ENCODE measurements at regions of chr6 and their contacts with region 1.

Region 1: GRCh38 chr6:111605100-111605751 is 452 bp downstream of the TRAF3IP2 start:
- DNase-seq: peak; percentile 88 to 91
- ATAC-seq: peak; percentile 83
- H3K4me3 ChIP-seq: peak overlapping the region; percentile 43 to 66
- H3K27ac ChIP-seq: peak overlapping the region; percentile 98 to 99
- H3K4me1 ChIP-seq: peaks cover 2 to 6% of the 10 kb centered on the region in 2 donors
- H3K27me3 ChIP-seq: no peaks in the 10 kb centered on the region

Region 2: DNA sequence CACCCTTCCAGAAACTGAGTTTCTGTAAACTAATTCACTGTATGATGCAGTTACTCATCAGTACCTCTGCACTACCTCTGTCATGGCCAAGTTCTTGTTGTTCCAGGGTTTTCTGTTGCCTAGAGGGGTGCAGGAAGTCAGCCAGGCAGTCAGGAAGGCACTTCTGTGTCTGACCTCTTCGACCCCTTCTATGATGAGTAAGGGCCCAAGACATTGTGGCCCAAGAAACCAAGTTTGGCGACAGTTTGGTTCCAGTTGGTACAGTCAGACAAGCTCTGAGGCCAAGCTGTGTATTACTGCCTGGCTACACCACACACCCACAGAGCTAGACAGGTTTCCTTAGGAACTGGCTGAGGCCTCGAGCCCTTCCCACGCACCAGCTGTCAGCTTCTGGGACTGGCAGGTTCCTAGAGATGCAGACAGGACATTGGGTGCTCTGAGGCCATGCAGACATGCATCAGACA is 40.7 kb before region 1 on chr6:
- intact Hi-C with region 1: loop called (anchors 5 kb)
- DNase-seq: peak; percentile 82 to 85
- ATAC-seq: peak; percentile 66
- H3K4me3 ChIP-seq: no peak overlapping the region
- H3K27ac ChIP-seq: peak overlapping the region in 1 of 2 donors; percentile 85
- H3K4me1 ChIP-seq: peaks cover 4 to 9% of the 10 kb centered on the region in 2 donors
- H3K27me3 ChIP-seq: no peaks in the 10 kb centered on the region

Region 3: DNA sequence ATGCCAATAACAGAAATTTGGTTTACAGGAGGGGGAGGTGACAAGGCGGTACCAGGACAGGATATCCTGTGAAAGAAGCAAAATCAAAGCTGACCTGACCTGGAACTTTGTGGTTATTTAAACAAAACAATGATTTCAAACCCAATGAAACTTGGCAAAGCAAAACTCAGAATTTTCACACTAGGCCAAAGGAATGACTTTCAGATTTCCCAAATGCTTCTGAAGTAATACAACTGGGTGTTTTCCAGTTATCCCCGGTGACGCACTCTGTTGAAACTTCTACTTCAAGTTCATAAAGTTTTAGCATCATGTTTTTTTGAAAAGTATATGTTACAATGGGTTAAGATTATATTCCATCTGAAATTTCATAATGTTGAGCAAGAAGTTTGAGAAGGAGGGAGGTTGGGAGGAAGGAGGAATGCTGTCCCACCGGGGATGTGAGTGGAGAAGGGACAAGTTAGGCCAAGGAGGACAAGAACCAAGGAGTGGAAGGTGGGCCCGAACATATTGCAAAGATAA is 78.6 kb after region 1 on chr6:
- intact Hi-C with region 1: loop called in 1 of 2 experiments (anchors 5 kb)
- DNase-seq: peak in 1 of 2 donors; percentile 59
- ATAC-seq: peak; percentile 73
- H3K4me3 ChIP-seq: no peak overlapping the region
- H3K27ac ChIP-seq: peak overlapping the region; percentile 12 to 61
- H3K4me1 ChIP-seq: peaks cover 3 to 11% of the 10 kb centered on the region in 2 donors
- H3K27me3 ChIP-seq: no peaks in the 10 kb centered on the region

Region 4: GRCh38 chr6:112087136-112087911 is 482.1 kb after region 1 on chr6 and contains the starts of genes FAM229B and TUBE1:
- intact Hi-C with region 1: no loop called
- DNase-seq: peak; percentile 95 to 96
- ATAC-seq: peak; percentile 99
- H3K4me3 ChIP-seq: peak within 1 kb of the TSS; percentile 94 to 98
- H3K27ac ChIP-seq: peak within 1 kb of the TSS in 1 of 2 donors; percentile 71
- H3K4me1 ChIP-seq: no peaks in the 10 kb centered on the region
- H3K27me3 ChIP-seq: no peaks in the 10 kb centered on the region
- total RNA-seq, gene FAM229B: 13.8 to 23.0 TPM
- total RNA-seq, gene TUBE1: 20.1 to 26.9 TPM

Measured in aorta (tissue), 5 donors.